ENCODE measurements at regions of chr1 and their contacts with region 1.

Region 1: DNA sequence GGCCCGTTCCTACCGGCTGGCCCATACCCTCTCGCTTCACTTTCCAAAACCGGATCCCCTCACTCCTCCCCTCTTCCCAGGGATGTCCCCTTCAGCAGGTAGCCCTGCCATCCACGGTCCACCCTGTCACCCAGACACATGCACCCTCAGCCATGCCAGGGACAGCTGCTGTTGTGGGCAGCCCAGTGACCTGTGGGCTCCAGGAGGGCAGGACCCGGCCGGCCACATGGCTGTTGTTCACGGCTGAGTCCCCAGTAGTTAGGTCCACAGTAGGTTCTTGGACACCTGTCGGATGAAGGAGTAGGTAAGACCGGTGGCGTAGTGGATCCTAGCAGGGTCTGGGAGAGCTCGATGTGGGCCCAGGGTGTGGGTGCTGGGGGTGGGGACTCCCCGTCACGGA is 12.5 kb downstream of the SPSB1 start:
- DNase-seq: peak in 1 of 5 donors; percentile 42
- ATAC-seq: no peak
- H3K4me3 ChIP-seq: no peak overlapping the region
- H3K27ac ChIP-seq: peak overlapping the region in 1 of 12 donors; percentile 43
- H3K4me1 ChIP-seq: peaks cover 4 to 44% (median 27%) of the 10 kb centered on the region in 12 donors
- H3K27me3 ChIP-seq: no peaks in the 10 kb centered on the region
- CTCF ChIP-seq: no peak
- POLR2A ChIP-seq: no peak

Region 2: GRCh38 chr1:9376886-9377333 is 71.7 kb after region 1 on chr1:
- intact Hi-C with region 1: loop called in 1 of 10 experiments (anchors 5 kb)
- DNase-seq: peak in 2 of 5 donors; percentile 57 to 77
- ATAC-seq: peak; percentile 51 to 79 (median 74)
- H3K4me3 ChIP-seq: no peak overlapping the region
- H3K27ac ChIP-seq: peak overlapping the region in 11 of 12 donors; percentile 47 to 84 (median 66)
- H3K4me1 ChIP-seq: peaks cover 0 to 44% (median 19%) of the 10 kb centered on the region in 12 donors
- H3K27me3 ChIP-seq: no peaks in the 10 kb centered on the region
- CTCF ChIP-seq: no peak
- POLR2A ChIP-seq: no peak

Measured in heart left ventricle (tissue), 16 donors.